ENCODE measurements at regions of chr10 and their contacts with region 1.

Region 1: GRCh38 chr10:92290837-92291615 is at the starts of genes CPEB3 and MARCHF5:
- DNase-seq: peak; percentile 93 to 95 (median 94)
- H3K4me3 ChIP-seq: peak within 1 kb of the TSS; percentile 68 to 93 (median 89)
- H3K4me3 Mint-ChIP-seq: peak within 1 kb of the TSS; percentile 93 to 96
- H3K27ac ChIP-seq: peak within 1 kb of the TSS; percentile 69 to 89
- H3K27ac Mint-ChIP-seq: peak within 1 kb of the TSS; percentile 60 to 92 (median 85)
- H3K4me1 ChIP-seq: peaks cover 10 to 27% of the 10 kb centered on the region in 2 donors
- H3K4me1 Mint-ChIP-seq: peaks cover 24% of the 10 kb centered on the region
- H3K27me3 ChIP-seq: no peaks in the 10 kb centered on the region
- H3K27me3 Mint-ChIP-seq: peaks cover 2 to 5% (median 3%) of the 10 kb centered on the region in 3 donors
- CTCF ChIP-seq: peak; percentile 75
- polyA plus RNA-seq, gene CPEB3: 1.8 to 2.9 (median 2.1) TPM
- polyA plus RNA-seq, gene MARCHF5: 15.8 to 30.6 (median 29.6) TPM

Region 2: DNA sequence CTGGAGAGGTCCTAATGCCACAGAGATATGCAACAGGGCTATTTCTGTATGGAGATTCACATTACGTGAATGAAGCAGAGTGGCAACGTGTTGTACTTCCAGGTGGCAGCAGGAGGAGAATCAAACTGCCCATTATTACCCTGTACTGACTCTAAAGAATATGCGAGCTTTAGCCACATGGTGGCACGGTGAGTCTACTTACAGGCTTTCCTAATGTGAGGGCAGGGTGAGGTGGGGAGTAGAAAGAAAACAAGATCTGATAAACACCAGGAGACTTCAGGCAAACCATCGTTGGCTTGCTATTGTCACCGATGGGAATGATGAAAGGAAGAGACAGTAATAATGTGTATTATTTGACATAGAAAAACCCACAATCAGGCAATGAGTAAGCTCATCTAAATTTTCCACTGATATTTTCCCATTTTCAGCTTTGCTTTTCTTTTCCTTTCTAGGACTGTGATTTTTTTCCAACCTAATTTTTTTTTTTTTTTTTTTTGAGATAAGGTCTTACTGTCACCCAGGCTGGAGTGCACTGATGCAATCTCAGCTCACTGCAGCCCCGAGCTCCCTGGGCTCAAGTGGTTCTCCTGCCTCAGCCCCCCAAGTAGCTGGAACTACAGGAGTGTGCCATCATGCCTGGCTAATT is 203.2 kb before region 1 on chr10:
- intact Hi-C with region 1: loop called (anchors 5 kb)
- DNase-seq: peak; percentile 50 to 59 (median 59)
- H3K4me3 ChIP-seq: no peak overlapping the region
- H3K4me3 Mint-ChIP-seq: no peak overlapping the region
- H3K27ac ChIP-seq: no peak overlapping the region
- H3K27ac Mint-ChIP-seq: peak overlapping the region in 1 of 7 donors; percentile 23
- H3K4me1 ChIP-seq: peaks cover 0 to 5% of the 10 kb centered on the region in 2 donors
- H3K4me1 Mint-ChIP-seq: peaks cover 11% of the 10 kb centered on the region
- H3K27me3 ChIP-seq: no peaks in the 10 kb centered on the region
- H3K27me3 Mint-ChIP-seq: peaks cover 0 to 2% (median 0%) of the 10 kb centered on the region in 3 donors
- CTCF ChIP-seq: peak; percentile 79

Region 3: DNA sequence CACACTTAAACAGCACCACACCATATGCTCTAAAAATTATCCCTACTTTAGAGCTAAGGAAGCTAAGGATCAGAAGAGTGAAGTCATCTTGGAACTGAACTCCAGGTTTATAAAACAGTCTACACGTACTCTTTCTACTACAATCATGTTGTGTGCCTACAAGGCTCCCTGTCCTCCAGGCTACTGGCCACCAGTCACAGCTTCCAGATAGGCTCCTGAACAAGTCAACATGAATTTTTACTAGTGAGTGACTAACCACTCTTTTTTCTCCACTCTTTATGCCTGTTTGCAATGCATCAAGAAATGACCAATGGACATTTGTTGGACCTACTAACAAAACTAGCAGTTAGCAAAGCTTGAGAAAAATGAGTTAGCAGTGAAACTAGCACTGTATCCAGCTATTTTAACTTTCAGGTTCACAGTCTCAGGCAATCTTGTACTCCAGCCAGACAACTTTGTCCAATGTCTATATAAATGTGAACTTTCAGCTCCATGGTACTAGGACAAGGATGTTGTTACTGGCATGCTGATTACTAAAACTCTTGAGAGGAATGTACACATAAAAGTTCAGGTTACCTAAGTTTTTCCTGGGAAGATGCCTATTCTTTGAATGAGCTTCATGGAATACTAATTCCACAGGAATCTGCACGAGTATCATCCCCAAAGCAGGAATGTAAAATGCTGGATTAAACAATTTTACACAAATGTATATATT is 187.5 kb before region 1 on chr10:
- intact Hi-C with region 1: loop called in 1 of 2 experiments (anchors 5 kb)
- DNase-seq: no peak
- H3K4me3 ChIP-seq: no peak overlapping the region
- H3K4me3 Mint-ChIP-seq: no peak overlapping the region
- H3K27ac ChIP-seq: no peak overlapping the region
- H3K27ac Mint-ChIP-seq: no peak overlapping the region
- H3K4me1 ChIP-seq: peaks cover 13 to 17% of the 10 kb centered on the region in 2 donors
- H3K4me1 Mint-ChIP-seq: peaks cover 16% of the 10 kb centered on the region
- H3K27me3 ChIP-seq: no peaks in the 10 kb centered on the region
- H3K27me3 Mint-ChIP-seq: peaks cover 0 to 1% (median 0%) of the 10 kb centered on the region in 3 donors
- CTCF ChIP-seq: no peak

Region 4: DNA sequence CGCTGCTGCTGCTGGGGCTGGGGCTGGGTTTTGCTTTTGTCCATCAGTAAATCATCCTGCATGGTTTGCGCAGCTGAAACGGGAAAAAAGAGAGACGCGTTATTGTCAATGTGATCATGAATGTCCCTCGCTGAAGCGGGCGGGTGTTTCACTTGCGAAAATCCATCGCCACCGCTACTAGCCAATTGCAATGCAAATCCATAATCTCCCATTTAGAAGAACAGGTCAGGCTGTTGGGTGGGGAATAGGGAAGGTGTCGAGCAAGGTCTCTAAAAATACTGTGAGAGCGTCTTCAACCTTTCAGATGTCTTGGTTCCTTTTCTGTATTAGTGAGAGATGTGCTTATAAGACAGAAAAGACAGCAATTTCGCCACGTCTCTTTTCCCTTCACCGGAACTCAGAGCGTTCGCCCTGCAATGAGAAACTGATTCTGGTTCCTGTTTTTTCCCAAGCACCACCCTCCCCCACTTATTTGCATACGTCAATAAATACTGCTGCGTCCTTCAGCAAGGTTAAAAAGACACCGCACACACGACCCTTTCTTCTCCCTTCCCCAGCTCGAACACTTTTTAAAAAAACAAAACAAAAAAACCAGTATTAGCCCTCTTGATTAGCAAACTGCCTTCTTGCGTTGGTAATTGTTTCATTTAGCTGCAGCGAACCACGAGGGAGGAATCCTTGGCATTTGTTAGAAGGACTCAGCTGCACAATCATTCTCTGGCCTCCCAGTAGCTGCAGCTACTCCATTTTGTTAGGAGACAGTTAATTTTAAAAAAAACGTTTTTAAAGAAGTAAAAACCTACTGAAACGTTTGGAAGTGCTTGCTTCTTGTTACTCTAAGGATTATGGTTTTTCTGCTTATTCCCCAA is 50.5 kb before region 1 on chr10:
- intact Hi-C with region 1: loop called (anchors 1 to 2 kb)
- DNase-seq: peak; percentile 77 to 90 (median 80)
- H3K4me3 ChIP-seq: peak overlapping the region; percentile 71 to 89 (median 89)
- H3K4me3 Mint-ChIP-seq: peak overlapping the region; percentile 93 to 99
- H3K27ac ChIP-seq: peak overlapping the region; percentile 88 to 89
- H3K27ac Mint-ChIP-seq: peak overlapping the region; percentile 87 to 97 (median 93)
- H3K4me1 ChIP-seq: peaks cover 39 to 49% of the 10 kb centered on the region in 2 donors
- H3K4me1 Mint-ChIP-seq: peaks cover 53% of the 10 kb centered on the region
- H3K27me3 ChIP-seq: no peaks in the 10 kb centered on the region
- H3K27me3 Mint-ChIP-seq: peaks cover 0 to 4% (median 0%) of the 10 kb centered on the region in 3 donors
- CTCF ChIP-seq: no peak